Caki2 (cell line): ENCODE measurements at regions of chr17 and their contacts with region 1.

Region 1: DNA sequence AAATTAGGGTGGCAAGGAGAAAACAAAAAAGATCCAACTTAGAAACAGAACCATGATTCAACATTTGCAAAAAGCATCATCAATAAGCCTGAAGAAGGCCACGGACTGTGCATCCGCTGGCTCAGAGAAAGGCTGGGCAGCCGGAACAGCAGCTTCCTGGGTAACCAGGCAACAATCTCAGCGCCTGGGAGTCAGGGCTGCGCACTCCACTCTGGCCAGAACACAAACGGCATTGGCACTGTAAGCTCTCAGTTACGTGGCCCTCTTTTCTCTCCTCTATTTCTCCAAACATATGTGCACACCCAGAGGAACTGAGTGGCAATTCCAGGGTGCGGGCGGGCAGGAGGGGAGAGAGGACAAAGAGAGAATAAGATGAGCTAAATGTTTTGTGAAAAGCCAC is 6.4 kb upstream of the GHDC start:
- DNase-seq: no peak

Region 2: GRCh38 chr17:42132941-42133340 is 67.8 kb before region 1 on chr17:
- in situ Hi-C with region 1: no loop called
- DNase-seq: peak; percentile 86

Region 3: GRCh38 chr17:42276359-42276608 is 75.6 kb after region 1 on chr17 and contains the start of gene STAT5B:
- in situ Hi-C with region 1: loop called (anchors 10 kb)
- DNase-seq: peak; percentile 57
- total RNA-seq, gene STAT5B: 13.7 and 14.4 TPM in 2 replicates